KBM-7 (cell line): ENCODE measurements at regions of chr5 and their contacts with region 1.

Region 1: DNA sequence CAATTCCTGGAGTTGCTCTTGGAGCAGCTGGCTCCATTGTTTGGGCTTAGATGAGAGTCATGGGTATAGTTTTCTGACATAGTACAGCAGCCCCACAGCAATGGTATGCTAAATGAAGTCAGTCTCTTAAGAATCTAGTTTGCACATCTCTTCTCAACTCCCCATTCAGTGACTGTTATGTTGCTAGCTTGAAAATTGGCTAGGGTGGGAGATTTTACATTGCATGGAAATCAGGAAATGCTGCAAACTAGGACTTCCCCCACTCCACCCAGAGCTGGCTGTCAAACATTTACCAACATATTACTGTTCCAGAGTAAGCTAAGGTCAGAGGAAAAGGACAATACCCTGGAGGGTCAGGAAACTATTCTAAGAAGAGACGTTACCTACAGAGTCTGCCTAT is 17.6 kb upstream of the FCHO2 start:
- DNase-seq: no peak

Region 2: GRCh38 chr5:72301557-72301956 is 636.6 kb before region 1 on chr5:
- in situ Hi-C with region 1: no loop called
- DNase-seq: no peak

Region 3: DNA sequence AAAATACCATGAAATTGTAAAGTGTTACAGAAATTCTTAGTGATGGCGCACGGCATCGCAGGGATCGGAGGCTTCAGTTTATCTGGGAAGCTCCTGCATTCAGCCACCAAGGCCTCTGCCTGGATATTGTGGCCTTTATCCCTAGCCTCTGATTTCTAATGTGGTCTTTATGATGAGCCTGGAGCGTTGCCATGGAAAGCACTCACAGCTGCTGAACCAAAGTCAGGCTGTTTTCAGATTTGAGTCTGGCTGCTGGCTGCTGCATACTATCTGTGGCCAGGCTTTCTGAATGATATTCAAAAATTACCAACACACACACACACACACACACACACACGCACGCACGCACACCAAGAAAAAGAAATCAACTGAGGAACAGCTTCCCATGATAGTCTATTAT is 329.9 kb before region 1 on chr5:
- in situ Hi-C with region 1: no loop called
- DNase-seq: no peak

Region 4: DNA sequence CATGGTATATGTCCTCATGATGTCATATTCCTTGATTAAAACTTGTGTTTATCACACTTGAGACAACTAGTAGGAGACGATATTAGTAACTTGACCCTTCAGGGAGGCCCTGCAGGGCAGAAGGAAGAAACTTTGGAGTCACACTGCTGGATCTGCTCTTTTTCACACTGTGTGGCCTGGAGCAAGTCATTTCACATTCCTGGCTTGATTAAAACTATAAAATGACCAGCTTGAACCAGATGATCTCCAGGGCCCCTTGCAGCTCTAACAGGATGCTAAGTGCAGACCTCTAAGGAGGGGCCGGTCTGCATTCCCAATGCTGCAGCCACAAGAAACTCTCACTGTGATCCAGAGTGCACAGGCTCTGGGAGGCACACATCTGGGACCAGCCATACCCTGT is 284.6 kb before region 1 on chr5:
- in situ Hi-C with region 1: no loop called
- DNase-seq: no peak

Region 5: DNA sequence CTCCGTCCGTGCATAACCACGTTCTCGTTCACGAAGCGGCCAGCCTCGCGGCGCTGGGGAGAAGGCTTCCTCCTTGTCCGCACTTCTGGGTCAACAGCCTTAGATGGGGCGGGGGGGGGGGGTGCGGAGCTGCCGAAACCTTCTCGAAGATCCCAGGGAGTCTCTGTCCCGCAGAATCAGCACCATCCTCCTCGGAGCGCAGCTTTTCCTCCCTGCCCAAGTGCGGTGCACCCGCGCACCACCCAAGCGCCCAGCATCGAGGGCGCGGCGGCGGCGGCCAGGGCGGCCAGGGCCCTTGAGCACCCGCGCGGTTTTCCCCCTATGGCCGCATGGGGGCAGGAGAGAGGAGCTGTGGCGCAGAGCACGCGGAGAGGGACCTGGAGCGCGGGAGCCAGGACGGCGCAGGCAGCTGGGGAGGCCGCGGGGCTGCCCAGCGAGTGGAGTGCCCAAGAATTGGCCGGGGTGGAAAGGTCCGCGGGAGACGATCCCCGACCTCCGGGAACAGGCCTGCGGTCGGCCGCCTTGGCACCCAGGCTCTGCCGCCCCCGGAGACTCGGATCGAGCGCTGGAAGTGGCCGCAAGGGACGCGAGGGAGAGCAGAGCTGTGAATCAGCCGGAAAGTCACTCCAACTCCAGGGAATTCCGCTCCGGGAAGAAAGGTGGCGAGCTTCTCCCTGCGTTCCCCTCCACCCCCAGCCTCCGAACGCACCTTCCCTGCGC is 277.8 kb after region 1 on chr5:
- in situ Hi-C with region 1: loop called (anchors 25 kb)
- DNase-seq: peak; percentile 79